OCI-LY7 (cell line): ENCODE measurements at regions of chr10 and their contacts with region 1.

Region 1: GRCh38 chr10:23648618-23649017 is 209.7 kb downstream of the OTUD1 start:
- DNase-seq: no peak
- H3K4me3 ChIP-seq: no peak overlapping the region
- H3K27ac ChIP-seq: no peak overlapping the region
- H3K4me1 ChIP-seq: no peaks in the 10 kb centered on the region
- CTCF ChIP-seq: no peak

Region 2: DNA sequence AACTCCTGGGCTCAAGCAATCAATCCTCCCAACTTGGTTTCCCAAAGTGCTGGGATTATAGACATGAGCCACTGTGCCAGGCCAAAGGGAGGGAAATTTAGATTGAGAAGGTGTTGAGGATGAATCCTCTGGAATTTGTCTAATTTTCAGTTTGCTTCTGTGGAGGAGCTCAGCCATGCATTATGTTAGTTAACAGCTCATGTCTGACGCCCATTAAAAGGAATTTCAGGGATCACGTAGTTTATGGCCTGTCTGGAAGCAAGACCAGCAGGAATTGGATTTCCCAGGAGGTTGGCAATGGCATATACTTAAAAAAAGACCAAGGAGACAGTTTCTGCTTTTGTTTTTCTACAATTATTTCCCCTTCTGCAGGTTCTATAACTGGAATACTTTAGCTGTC is 44.0 kb before region 1 on chr10:
- CTCF ChIA-PET with region 1: no interaction called
- POLR2A ChIA-PET with region 1: no interaction called
- intact Hi-C with region 1: no loop called
- DNase-seq: no peak
- H3K4me3 ChIP-seq: no peak overlapping the region
- H3K27ac ChIP-seq: no peak overlapping the region
- H3K4me1 ChIP-seq: no peaks in the 10 kb centered on the region
- CTCF ChIP-seq: no peak

Region 3: DNA sequence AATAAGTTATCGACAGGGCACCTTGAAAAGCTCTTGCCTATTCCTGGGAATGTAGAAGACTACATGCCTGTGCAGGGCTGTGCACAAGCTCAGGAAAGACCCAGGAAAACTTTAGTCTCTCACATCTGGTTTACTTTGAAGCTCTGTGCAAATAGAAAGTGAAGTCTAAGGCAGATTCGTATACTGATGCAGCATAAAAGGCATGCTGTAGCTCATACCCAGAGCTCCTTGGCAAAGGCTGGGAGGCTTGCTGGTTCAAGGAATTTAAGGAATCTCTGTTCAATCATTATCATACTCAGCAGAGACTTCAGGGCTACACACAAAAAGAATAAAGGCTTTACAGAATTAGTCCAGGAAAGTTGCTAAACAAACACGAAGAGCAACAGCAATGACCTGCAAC is 17.7 kb before region 1 on chr10:
- CTCF ChIA-PET with region 1: no interaction called
- POLR2A ChIA-PET with region 1: no interaction called
- intact Hi-C with region 1: no loop called
- DNase-seq: no peak
- H3K4me3 ChIP-seq: no peak overlapping the region
- H3K27ac ChIP-seq: no peak overlapping the region
- H3K4me1 ChIP-seq: no peaks in the 10 kb centered on the region
- CTCF ChIP-seq: no peak

Region 4: GRCh38 chr10:24390146-24390700 is 741.6 kb after region 1 on chr10:
- CTCF ChIA-PET with region 1: no interaction called
- POLR2A ChIA-PET with region 1: interaction called, 10 read pairs
- intact Hi-C with region 1: no loop called
- DNase-seq: no peak
- H3K4me3 ChIP-seq: no peak overlapping the region
- H3K27ac ChIP-seq: no peak overlapping the region
- H3K4me1 ChIP-seq: no peaks in the 10 kb centered on the region
- CTCF ChIP-seq: no peak